ENCODE measurements at regions of chr5 and their contacts with region 1.

Region 1: GRCh38 chr5:73088026-73088425 is 32.3 kb upstream of the TMEM171 start:
- DNase-seq: no peak
- H3K4me3 Mint-ChIP-seq: no peak overlapping the region
- H3K27ac Mint-ChIP-seq: no peak overlapping the region
- H3K4me1 Mint-ChIP-seq: peaks cover 9% of the 10 kb centered on the region
- H3K27me3 Mint-ChIP-seq: no peaks in the 10 kb centered on the region
- CTCF ChIP-seq: no peak

Region 2: GRCh38 chr5:72920690-72921502 is 167.1 kb before region 1 on chr5:
- CTCF ChIA-PET with region 1: no interaction called
- POLR2A ChIA-PET with region 1: no interaction called
- intact Hi-C with region 1: loop called (anchors 2 kb)
- DNase-seq: peak; percentile 45
- H3K4me3 Mint-ChIP-seq: no peak overlapping the region
- H3K27ac Mint-ChIP-seq: no peak overlapping the region
- H3K4me1 Mint-ChIP-seq: no peaks in the 10 kb centered on the region
- H3K27me3 Mint-ChIP-seq: no peaks in the 10 kb centered on the region
- CTCF ChIP-seq: peak; percentile 38

Region 3: GRCh38 chr5:72938206-72938605 is 149.8 kb before region 1 on chr5:
- CTCF ChIA-PET with region 1: no interaction called
- POLR2A ChIA-PET with region 1: no interaction called
- intact Hi-C with region 1: no loop called
- DNase-seq: no peak
- H3K4me3 Mint-ChIP-seq: no peak overlapping the region
- H3K27ac Mint-ChIP-seq: no peak overlapping the region
- H3K4me1 Mint-ChIP-seq: peaks cover 1% of the 10 kb centered on the region
- H3K27me3 Mint-ChIP-seq: no peaks in the 10 kb centered on the region
- CTCF ChIP-seq: no peak

Region 4: GRCh38 chr5:73201547-73202513 is 113.8 kb after region 1 on chr5:
- CTCF ChIA-PET with region 1: interaction called, 10 read pairs
- POLR2A ChIA-PET with region 1: no interaction called
- intact Hi-C with region 1: loop called (anchors 1 kb)
- DNase-seq: peak; percentile 74
- H3K4me3 Mint-ChIP-seq: peak overlapping the region; percentile 26
- H3K27ac Mint-ChIP-seq: no peak overlapping the region
- H3K4me1 Mint-ChIP-seq: no peaks in the 10 kb centered on the region
- H3K27me3 Mint-ChIP-seq: no peaks in the 10 kb centered on the region
- CTCF ChIP-seq: peak; percentile 80

Region 5: DNA sequence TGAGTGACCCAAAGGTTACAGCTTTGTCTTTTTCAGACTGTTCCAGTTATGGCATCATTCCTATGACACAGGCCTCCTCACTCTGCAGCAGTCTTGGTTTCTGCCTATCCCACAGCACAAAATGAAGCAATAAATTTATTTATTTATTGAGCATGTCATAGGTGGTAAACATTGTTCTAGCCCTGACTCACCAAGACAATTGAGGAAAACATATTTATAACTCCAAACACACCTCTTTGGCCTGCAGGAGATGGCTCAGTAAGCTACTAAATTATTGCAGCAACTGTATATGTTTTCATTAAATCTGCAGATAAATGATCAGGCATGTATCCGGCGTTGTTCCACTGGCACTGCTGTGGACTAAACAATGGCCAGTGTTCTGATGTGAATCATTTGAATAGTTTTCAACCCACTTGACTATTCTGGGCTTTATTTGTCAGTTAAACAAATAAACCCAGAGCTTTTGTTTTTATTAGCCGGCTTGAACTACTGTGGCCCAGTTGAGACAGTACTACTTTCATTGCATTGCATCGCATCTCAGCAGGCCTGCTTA is 277.4 kb after region 1 on chr5:
- CTCF ChIA-PET with region 1: interaction called, 4 read pairs
- POLR2A ChIA-PET with region 1: no interaction called
- intact Hi-C with region 1: loop called (anchors 10 kb)
- DNase-seq: peak; percentile 69
- H3K4me3 Mint-ChIP-seq: no peak overlapping the region
- H3K27ac Mint-ChIP-seq: peak overlapping the region; percentile 71
- H3K4me1 Mint-ChIP-seq: peaks cover 33% of the 10 kb centered on the region
- H3K27me3 Mint-ChIP-seq: no peaks in the 10 kb centered on the region
- CTCF ChIP-seq: no peak

Region 6: GRCh38 chr5:73448463-73449136 is 360.6 kb after region 1 on chr5 and contains the start of gene FOXD1:
- CTCF ChIA-PET with region 1: interaction called, 14 read pairs
- POLR2A ChIA-PET with region 1: interaction called, 4 read pairs
- intact Hi-C with region 1: loop called (anchors 1 kb)
- DNase-seq: peak; percentile 91
- H3K4me3 Mint-ChIP-seq: peak within 1 kb of the TSS; percentile 85
- H3K27ac Mint-ChIP-seq: peak within 1 kb of the TSS; percentile 87
- H3K4me1 Mint-ChIP-seq: peaks cover 11% of the 10 kb centered on the region
- H3K27me3 Mint-ChIP-seq: no peaks in the 10 kb centered on the region
- CTCF ChIP-seq: no peak
- total RNA-seq, gene FOXD1: 46.4 and 50.9 TPM in 2 replicates

Region 7: GRCh38 chr5:73454351-73455036 is 366.5 kb after region 1 on chr5:
- CTCF ChIA-PET with region 1: interaction called, 14 read pairs
- POLR2A ChIA-PET with region 1: interaction called, 4 read pairs
- intact Hi-C with region 1: loop called (anchors 1 kb)
- DNase-seq: peak; percentile 85
- H3K4me3 Mint-ChIP-seq: no peak overlapping the region
- H3K27ac Mint-ChIP-seq: no peak overlapping the region
- H3K4me1 Mint-ChIP-seq: peaks cover 5% of the 10 kb centered on the region
- H3K27me3 Mint-ChIP-seq: no peaks in the 10 kb centered on the region
- CTCF ChIP-seq: peak; percentile 70

Region 8: DNA sequence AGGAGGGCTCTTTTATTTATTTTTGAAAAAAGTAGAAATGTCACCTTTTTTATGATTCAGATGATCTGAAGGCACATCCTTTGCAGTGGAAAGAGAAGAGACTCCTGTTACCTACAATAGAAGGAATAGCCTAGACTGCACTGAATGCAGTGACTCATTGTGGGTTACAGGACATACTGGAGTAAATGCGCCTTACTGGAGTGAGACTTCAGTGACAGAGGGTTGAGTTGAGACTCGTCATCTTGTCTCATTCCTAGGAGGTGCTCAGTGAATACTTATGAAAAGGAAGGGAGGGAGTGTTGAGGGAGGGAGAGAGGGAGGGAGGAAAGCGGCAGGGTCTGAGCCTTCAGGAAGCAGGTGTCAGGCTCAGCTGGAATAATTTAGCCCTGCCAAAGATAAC is 452.2 kb after region 1 on chr5:
- CTCF ChIA-PET with region 1: interaction called, 9 read pairs
- POLR2A ChIA-PET with region 1: no interaction called
- intact Hi-C with region 1: loop called (anchors 2 kb)
- DNase-seq: peak; percentile 68
- H3K4me3 Mint-ChIP-seq: no peak overlapping the region
- H3K27ac Mint-ChIP-seq: peak overlapping the region; percentile 61
- H3K4me1 Mint-ChIP-seq: peaks cover 34% of the 10 kb centered on the region
- H3K27me3 Mint-ChIP-seq: no peaks in the 10 kb centered on the region
- CTCF ChIP-seq: no peak

Measured in MCF 10A (cell line).